Caco-2 (cell line): ENCODE measurements at regions of chr11 and their contacts with region 1.

Region 1: DNA sequence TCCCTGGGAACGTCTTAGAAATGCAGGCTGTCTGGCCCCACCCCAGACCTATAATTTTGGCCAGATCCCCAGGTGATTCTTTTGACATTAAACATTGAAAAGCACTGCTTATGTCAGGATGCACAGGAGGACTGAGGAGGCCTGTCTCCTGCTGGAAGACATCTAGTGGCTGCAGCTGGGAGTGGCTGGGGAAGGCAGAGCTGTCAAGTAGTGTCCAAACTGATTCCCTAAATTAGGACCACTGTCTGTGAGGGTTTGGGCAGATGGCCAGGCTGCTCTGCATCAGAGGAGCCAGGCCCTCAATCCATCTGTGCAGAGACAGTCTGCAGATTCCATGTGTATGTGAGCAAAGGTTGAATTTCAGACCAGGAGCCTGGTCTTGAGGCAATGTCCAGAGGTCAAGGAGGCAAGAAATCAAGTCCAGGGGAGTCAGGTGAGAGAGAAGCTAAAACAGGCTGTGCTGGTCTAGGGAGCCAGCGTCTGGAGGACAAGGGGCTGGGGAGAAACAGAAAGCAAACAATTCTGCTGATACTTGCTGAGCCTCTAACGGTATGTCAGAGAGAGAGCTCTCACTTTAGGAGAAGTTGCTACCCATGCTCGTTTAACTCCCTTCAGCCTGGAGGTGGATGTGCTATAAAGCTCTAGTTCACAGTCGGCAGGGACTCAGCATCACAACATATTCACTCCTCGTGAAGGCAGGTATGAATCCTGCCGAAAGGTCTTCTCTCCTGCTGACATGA is 15.3 kb upstream of the SYTL2 start:
- DNase-seq: peak; percentile 78 to 80
- H3K4me3 ChIP-seq: no peak overlapping the region
- H3K4me3 Mint-ChIP-seq: peak overlapping the region; percentile 14
- H3K27ac Mint-ChIP-seq: peak overlapping the region; percentile 17
- H3K4me1 ChIP-seq: peaks cover 47% of the 10 kb centered on the region
- H3K4me1 Mint-ChIP-seq: peaks cover 37% of the 10 kb centered on the region
- H3K27me3 ChIP-seq: no peaks in the 10 kb centered on the region
- H3K27me3 Mint-ChIP-seq: no peaks in the 10 kb centered on the region
- CTCF ChIP-seq: peak; percentile 75 to 90

Region 2: DNA sequence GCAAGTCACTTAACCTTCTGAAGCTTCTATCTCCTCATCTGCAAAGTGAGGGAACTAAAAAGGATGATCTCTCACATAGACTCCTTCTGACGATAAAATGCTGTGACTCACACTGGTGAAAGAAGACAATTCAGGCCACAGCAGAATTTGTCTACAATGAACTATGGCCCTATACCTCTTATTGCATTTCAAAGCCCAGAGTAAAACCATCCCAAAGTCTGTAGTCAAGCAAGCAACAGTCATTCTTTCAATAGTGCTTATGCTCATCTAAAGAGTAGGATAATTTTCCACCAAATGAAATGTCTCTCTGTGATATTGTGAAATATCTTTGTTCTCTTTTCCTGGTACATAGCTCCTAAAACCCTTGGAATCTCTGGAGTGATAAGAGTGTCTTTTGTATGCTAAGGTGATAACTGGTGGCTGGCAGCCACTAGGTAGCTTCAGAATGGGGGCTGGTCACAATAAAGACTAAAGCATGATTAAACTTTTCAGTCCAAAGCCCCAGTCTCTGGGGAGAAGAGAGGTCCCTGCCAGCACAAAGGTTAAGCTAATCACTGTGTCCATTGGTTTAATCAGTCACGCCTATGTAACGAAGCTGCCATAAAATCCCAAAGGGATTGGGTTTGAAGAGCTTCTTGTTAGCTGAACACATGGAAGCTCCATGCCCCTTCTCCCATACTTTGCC is 46.2 kb before region 1 on chr11:
- CTCF ChIA-PET with region 1: interaction called, 4 read pairs
- POLR2A ChIA-PET with region 1: no interaction called
- intact Hi-C with region 1: loop called (anchors 1 kb)
- DNase-seq: peak; percentile 79 to 89
- H3K4me3 ChIP-seq: no peak overlapping the region
- H3K4me3 Mint-ChIP-seq: peak overlapping the region; percentile 44
- H3K27ac Mint-ChIP-seq: peak overlapping the region; percentile 74
- H3K4me1 ChIP-seq: peaks cover 65% of the 10 kb centered on the region
- H3K4me1 Mint-ChIP-seq: peaks cover 64% of the 10 kb centered on the region
- H3K27me3 ChIP-seq: no peaks in the 10 kb centered on the region
- H3K27me3 Mint-ChIP-seq: no peaks in the 10 kb centered on the region
- CTCF ChIP-seq: no peak

Region 3: GRCh38 chr11:85787809-85788805 is 38.2 kb before region 1 on chr11:
- CTCF ChIA-PET with region 1: interaction called, 4 read pairs
- POLR2A ChIA-PET with region 1: no interaction called
- intact Hi-C with region 1: loop called (anchors 1 kb)
- DNase-seq: peak; percentile 79 to 91
- H3K4me3 ChIP-seq: no peak overlapping the region
- H3K4me3 Mint-ChIP-seq: peak overlapping the region; percentile 61
- H3K27ac Mint-ChIP-seq: peak overlapping the region; percentile 86
- H3K4me1 ChIP-seq: peaks cover 69% of the 10 kb centered on the region
- H3K4me1 Mint-ChIP-seq: peaks cover 62% of the 10 kb centered on the region
- H3K27me3 ChIP-seq: no peaks in the 10 kb centered on the region
- H3K27me3 Mint-ChIP-seq: no peaks in the 10 kb centered on the region
- CTCF ChIP-seq: no peak

Region 4: DNA sequence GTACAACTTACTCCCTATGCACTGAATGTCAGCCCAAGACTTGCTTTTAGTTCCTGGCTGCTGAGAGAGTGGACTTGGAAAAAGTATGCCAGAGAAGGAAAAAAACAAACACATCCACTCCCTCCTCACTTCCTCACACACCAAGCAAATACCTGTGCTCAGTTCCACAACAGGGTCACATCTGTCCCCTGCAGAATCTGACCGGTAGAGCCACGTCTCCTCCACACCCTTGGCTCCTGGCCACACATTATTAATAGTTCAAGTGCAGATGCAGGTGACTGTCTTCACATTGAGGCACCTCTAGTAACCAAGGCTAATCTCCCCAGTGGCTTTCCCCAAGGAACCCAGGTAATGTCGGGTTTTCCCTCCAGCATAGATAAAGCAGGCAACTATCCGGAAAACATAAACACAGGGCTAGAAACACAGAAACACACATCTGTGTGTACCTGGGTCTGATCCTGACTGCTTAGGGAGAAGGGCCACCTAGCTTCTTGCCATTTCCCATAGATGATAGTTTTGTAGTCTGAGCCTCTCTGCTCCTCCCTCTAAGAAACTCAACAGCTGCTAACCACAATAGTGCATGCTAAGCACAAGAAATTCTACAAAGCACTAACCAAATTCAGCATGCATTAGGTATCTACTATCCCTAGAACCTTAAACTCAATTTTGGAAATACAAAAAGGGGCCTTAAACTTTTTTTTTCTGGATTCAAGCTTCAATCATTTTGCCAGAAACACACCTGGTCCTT is 25.5 kb before region 1 on chr11:
- CTCF ChIA-PET with region 1: no interaction called
- POLR2A ChIA-PET with region 1: no interaction called
- intact Hi-C with region 1: loop called (anchors 1 kb)
- DNase-seq: no peak
- H3K4me3 ChIP-seq: no peak overlapping the region
- H3K4me3 Mint-ChIP-seq: no peak overlapping the region
- H3K27ac Mint-ChIP-seq: peak overlapping the region; percentile 85
- H3K4me1 ChIP-seq: peaks cover 66% of the 10 kb centered on the region
- H3K4me1 Mint-ChIP-seq: peaks cover 71% of the 10 kb centered on the region
- H3K27me3 ChIP-seq: no peaks in the 10 kb centered on the region
- H3K27me3 Mint-ChIP-seq: no peaks in the 10 kb centered on the region
- CTCF ChIP-seq: no peak

Region 5: DNA sequence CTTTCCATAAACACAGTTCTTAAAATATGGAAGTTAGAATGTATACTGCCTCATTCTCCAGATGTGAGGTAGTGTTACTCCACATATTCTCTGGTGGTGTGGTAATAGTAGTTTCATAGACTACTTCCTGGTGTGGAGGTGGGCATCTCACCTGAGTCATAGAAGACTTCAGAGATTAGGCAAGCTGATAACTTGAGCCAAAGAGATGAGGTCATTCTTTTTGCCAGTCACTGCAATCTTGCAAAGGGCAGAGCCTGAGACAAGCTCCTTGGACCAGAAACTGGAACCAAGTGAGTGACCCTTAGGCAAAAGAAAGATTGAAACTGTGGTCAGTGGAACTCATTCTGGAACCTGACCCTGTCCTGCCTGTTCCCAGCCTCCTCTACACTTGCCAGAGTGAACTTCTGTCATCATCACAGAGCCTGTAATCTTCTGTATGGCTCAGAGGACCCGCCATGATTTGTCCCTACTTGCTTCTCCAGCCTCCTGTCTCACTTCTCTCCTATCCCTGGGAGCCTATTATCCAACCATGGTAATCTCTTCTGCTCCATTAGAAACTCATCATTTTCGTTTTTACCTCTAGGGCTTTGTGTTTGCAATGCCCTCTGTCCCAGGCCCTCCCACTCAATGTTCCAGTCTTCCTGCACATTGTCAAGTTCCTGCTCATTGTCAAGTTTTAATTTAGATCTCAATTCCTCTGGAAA is 18.3 kb after region 1 on chr11:
- CTCF ChIA-PET with region 1: no interaction called
- POLR2A ChIA-PET with region 1: no interaction called
- intact Hi-C with region 1: loop called (anchors 2 kb)
- DNase-seq: peak; percentile 62 to 68
- H3K4me3 ChIP-seq: no peak overlapping the region
- H3K4me3 Mint-ChIP-seq: no peak overlapping the region
- H3K27ac Mint-ChIP-seq: no peak overlapping the region
- H3K4me1 ChIP-seq: peaks cover 14% of the 10 kb centered on the region; the same call in 1 of the 2 replicates
- H3K4me1 Mint-ChIP-seq: peaks cover 14% of the 10 kb centered on the region
- H3K27me3 ChIP-seq: no peaks in the 10 kb centered on the region
- H3K27me3 Mint-ChIP-seq: no peaks in the 10 kb centered on the region
- CTCF ChIP-seq: no peak

Region 6: DNA sequence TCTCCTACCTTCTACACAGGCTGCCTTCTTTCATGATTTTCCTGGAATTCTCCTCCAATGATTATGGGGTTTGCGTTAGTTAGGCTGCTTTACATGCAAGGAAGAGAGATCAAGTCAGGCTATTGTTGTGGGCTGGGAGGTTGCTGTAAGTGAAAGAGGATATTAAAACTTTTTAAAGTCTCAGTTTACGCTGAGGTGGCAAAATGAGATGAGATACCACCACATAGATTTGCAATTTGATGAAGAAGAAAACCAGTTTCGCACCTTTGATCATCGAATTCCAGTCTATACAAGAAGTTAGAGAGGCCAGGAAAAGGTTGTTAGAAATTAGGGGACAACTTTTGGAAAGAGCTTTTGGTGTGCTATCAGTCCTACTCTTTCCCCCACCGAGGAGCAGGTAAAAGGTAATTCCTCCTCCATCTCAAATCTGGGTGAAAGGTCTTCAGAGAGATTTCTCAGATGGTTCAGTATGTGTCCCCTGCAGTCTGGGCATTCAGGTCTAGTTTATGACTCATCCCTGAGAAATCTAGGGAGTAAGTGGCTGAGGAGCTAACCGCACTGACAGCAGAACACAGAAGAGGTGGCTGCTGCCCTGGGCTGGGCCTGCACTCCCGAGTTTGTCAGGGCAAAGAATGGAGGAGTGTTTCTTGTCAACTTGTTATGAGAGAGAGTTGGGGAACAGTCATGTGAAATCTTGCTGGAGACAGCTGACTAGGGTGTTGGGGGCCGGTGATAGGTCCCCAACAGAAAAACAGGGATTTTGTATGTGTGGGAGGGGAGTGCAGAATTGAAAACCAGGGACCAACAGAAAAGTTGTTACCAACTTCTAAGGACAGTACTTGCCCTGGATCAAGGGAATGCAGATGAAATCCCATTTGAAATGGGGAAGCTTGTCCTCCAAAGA is 63.6 kb after region 1 on chr11:
- CTCF ChIA-PET with region 1: no interaction called
- POLR2A ChIA-PET with region 1: no interaction called
- intact Hi-C with region 1: no loop called
- DNase-seq: peak; percentile 60 to 73
- H3K4me3 ChIP-seq: no peak overlapping the region
- H3K4me3 Mint-ChIP-seq: peak overlapping the region; percentile 18
- H3K27ac Mint-ChIP-seq: peak overlapping the region; percentile 49
- H3K4me1 ChIP-seq: peaks cover 31% of the 10 kb centered on the region
- H3K4me1 Mint-ChIP-seq: peaks cover 28% of the 10 kb centered on the region
- H3K27me3 ChIP-seq: no peaks in the 10 kb centered on the region
- H3K27me3 Mint-ChIP-seq: no peaks in the 10 kb centered on the region
- CTCF ChIP-seq: no peak

Region 7: DNA sequence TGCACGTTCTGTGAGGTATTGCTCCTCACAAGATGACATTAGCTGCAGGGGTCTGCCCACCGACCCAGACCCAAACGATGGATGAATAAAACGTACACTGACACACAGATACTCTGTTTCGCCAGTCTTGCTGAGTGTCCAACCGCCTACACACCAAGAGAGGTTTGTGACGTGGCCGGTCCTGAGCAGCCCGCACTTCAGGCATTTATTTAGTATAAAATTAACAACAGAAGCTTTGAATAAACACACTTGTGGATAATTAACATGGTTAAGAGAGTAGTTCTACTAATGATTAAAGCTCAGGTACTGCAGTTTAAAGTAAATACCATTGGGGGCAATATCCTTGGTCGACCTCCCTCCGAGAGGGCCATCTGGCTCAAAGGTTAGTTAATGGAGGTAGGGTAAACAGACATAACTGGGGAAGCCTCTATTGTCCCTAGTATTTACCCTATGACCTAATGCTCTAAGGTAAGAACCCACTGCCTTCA is 104.6 kb after region 1 on chr11:
- CTCF ChIA-PET with region 1: no interaction called
- POLR2A ChIA-PET with region 1: no interaction called
- intact Hi-C with region 1: no loop called
- DNase-seq: peak; percentile 74 to 87
- H3K4me3 ChIP-seq: no peak overlapping the region
- H3K4me3 Mint-ChIP-seq: no peak overlapping the region
- H3K27ac Mint-ChIP-seq: peak overlapping the region; percentile 46
- H3K4me1 ChIP-seq: peaks cover 31% of the 10 kb centered on the region
- H3K4me1 Mint-ChIP-seq: peaks cover 29% of the 10 kb centered on the region
- H3K27me3 ChIP-seq: no peaks in the 10 kb centered on the region
- H3K27me3 Mint-ChIP-seq: no peaks in the 10 kb centered on the region
- CTCF ChIP-seq: no peak

Region 8: GRCh38 chr11:86174101-86175046 is 348.1 kb after region 1 on chr11:
- CTCF ChIA-PET with region 1: no interaction called
- POLR2A ChIA-PET with region 1: no interaction called
- intact Hi-C with region 1: no loop called
- DNase-seq: peak in 1 of 2 experiments; percentile 82
- H3K4me3 ChIP-seq: no peak overlapping the region
- H3K4me3 Mint-ChIP-seq: no peak overlapping the region
- H3K27ac Mint-ChIP-seq: no peak overlapping the region
- H3K4me1 ChIP-seq: peaks cover 33% of the 10 kb centered on the region
- H3K4me1 Mint-ChIP-seq: peaks cover 13% of the 10 kb centered on the region
- H3K27me3 ChIP-seq: no peaks in the 10 kb centered on the region
- H3K27me3 Mint-ChIP-seq: no peaks in the 10 kb centered on the region
- CTCF ChIP-seq: no peak